Activated T-helper 2 cell treated with anti-CD3 and anti-CD28 coated beads, Interferon-gamma antibody, Interleukin-2, Interleukin-4, amounts not matched to agents 10 μg/mL and 5 μg/mL and 100 μg/mL, durations not matched to agents 14 hours and 24 hours and 36 hours (primary cell): ENCODE measurements at regions of chr16 and their contacts with region 1.

Region 1: DNA sequence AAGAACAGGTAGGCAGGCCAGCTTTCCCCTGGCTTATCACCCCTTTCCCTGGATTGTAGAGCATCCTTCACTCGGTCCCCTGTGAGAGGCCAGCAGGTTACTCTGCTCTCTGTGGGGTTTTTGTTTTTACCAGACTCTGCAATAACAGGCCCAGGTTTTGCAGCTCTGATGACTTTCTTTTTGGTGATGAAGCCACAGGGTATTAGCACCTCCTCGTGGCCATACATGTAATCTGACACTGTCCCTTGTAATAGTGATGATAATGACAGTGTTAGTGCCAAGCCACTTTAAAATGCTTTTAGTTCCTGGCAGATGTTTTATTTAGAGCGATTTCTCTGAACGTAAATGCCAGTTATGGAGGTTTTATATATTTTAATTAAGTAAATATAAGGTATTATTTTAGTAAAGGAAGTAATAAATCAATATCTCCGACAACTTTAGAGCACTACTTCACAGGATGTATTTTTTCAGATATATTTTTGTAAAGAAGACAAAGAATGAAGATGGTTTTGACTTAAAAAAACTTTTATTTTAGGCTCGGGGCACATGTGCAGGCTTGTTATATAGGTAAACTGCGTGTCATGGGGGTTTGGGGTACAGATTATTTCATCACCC is 38.0 kb upstream of the CPHXL start:
- DNase-seq: peak; percentile 33
- H3K4me3 Mint-ChIP-seq: no peak overlapping the region
- H3K27ac Mint-ChIP-seq: no peak overlapping the region
- H3K4me1 Mint-ChIP-seq: peaks cover 5% of the 10 kb centered on the region
- H3K27me3 Mint-ChIP-seq: peaks cover 6% of the 10 kb centered on the region

Region 2: GRCh38 chr16:75471723-75472633 is 292.3 kb before region 1 on chr16:
- intact Hi-C with region 1: loop called (anchors 1 kb)
- DNase-seq: peak; percentile 19
- H3K4me3 Mint-ChIP-seq: no peak overlapping the region
- H3K27ac Mint-ChIP-seq: no peak overlapping the region
- H3K4me1 Mint-ChIP-seq: peaks cover 2% of the 10 kb centered on the region
- H3K27me3 Mint-ChIP-seq: peaks cover 2% of the 10 kb centered on the region